Activated CD8-positive, alpha-beta T cell treated with anti-CD3 and anti-CD28 coated beads for 36 hours (primary cell): ENCODE measurements at regions of chr18 and their contacts with region 1.

Region 1: GRCh38 chr18:12934454-12935071 is 13.2 kb upstream of the SEH1L start:
- DNase-seq: peak; percentile 89
- ATAC-seq: peak; percentile 96
- H3K4me3 Mint-ChIP-seq: no peak overlapping the region
- H3K27ac Mint-ChIP-seq: no peak overlapping the region
- H3K4me1 Mint-ChIP-seq: peaks cover 2% of the 10 kb centered on the region
- H3K27me3 Mint-ChIP-seq: peaks cover 2% of the 10 kb centered on the region
- CTCF ChIP-seq: peak; percentile 92

Region 2: GRCh38 chr18:12442946-12443345 is 491.6 kb before region 1 on chr18:
- CTCF ChIA-PET with region 1: no interaction called
- POLR2A ChIA-PET with region 1: no interaction called
- intact Hi-C with region 1: no loop called
- DNase-seq: no peak
- ATAC-seq: no peak
- H3K4me3 Mint-ChIP-seq: no peak overlapping the region
- H3K27ac Mint-ChIP-seq: no peak overlapping the region
- H3K4me1 Mint-ChIP-seq: no peaks in the 10 kb centered on the region
- H3K27me3 Mint-ChIP-seq: no peaks in the 10 kb centered on the region
- CTCF ChIP-seq: no peak

Region 3: GRCh38 chr18:12726774-12727550 is 207.6 kb before region 1 on chr18:
- CTCF ChIA-PET with region 1: interaction called, 132 read pairs
- POLR2A ChIA-PET with region 1: no interaction called
- intact Hi-C with region 1: loop called (anchors 2 kb)
- DNase-seq: peak; percentile 66
- ATAC-seq: peak; percentile 86
- H3K4me3 Mint-ChIP-seq: no peak overlapping the region
- H3K27ac Mint-ChIP-seq: no peak overlapping the region
- H3K4me1 Mint-ChIP-seq: peaks cover under 1% of the 10 kb centered on the region
- H3K27me3 Mint-ChIP-seq: no peaks in the 10 kb centered on the region
- CTCF ChIP-seq: peak; percentile 96

Region 4: GRCh38 chr18:12744103-12744502 is 190.5 kb before region 1 on chr18:
- CTCF ChIA-PET with region 1: interaction called, 44 read pairs
- POLR2A ChIA-PET with region 1: interaction called, 3 read pairs
- intact Hi-C with region 1: loop called (anchors 5 kb)
- DNase-seq: no peak
- ATAC-seq: peak; percentile 53
- H3K4me3 Mint-ChIP-seq: no peak overlapping the region
- H3K27ac Mint-ChIP-seq: no peak overlapping the region
- H3K4me1 Mint-ChIP-seq: no peaks in the 10 kb centered on the region
- H3K27me3 Mint-ChIP-seq: no peaks in the 10 kb centered on the region
- CTCF ChIP-seq: peak; percentile 64

Region 5: DNA sequence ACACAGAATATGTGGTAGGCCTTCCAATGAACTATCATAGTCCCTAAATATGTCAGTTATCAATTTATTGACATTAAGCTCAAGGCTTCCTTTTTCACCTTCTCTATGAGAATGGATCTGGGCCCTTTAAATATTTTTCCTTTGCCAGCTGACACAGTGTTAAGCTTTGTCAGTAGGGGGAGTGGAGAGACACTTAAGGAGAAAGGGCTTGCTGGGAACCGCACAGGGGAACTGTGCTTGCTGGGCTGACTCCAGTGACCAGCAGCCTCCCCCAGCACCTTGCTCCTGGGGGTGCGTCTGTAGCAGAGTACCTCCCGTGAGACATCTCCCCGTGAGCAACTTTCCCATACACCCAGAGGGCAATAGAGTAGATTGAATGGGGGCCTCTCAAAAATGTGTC is 44.1 kb before region 1 on chr18:
- CTCF ChIA-PET with region 1: interaction called, 46 read pairs
- POLR2A ChIA-PET with region 1: no interaction called
- intact Hi-C with region 1: no loop called
- DNase-seq: no peak
- ATAC-seq: no peak
- H3K4me3 Mint-ChIP-seq: no peak overlapping the region
- H3K27ac Mint-ChIP-seq: no peak overlapping the region
- H3K4me1 Mint-ChIP-seq: peaks cover 16% of the 10 kb centered on the region
- H3K27me3 Mint-ChIP-seq: peaks cover 9% of the 10 kb centered on the region
- CTCF ChIP-seq: no peak

Region 6: GRCh38 chr18:12911025-12911928 is 23.3 kb before region 1 on chr18:
- CTCF ChIA-PET with region 1: interaction called, 13 read pairs
- POLR2A ChIA-PET with region 1: no interaction called
- intact Hi-C with region 1: no loop called
- DNase-seq: peak; percentile 78
- ATAC-seq: peak; percentile 94
- H3K4me3 Mint-ChIP-seq: peak overlapping the region; percentile 32
- H3K27ac Mint-ChIP-seq: peak overlapping the region; percentile 57
- H3K4me1 Mint-ChIP-seq: peaks cover 8% of the 10 kb centered on the region
- H3K27me3 Mint-ChIP-seq: no peaks in the 10 kb centered on the region
- CTCF ChIP-seq: no peak

Region 7: DNA sequence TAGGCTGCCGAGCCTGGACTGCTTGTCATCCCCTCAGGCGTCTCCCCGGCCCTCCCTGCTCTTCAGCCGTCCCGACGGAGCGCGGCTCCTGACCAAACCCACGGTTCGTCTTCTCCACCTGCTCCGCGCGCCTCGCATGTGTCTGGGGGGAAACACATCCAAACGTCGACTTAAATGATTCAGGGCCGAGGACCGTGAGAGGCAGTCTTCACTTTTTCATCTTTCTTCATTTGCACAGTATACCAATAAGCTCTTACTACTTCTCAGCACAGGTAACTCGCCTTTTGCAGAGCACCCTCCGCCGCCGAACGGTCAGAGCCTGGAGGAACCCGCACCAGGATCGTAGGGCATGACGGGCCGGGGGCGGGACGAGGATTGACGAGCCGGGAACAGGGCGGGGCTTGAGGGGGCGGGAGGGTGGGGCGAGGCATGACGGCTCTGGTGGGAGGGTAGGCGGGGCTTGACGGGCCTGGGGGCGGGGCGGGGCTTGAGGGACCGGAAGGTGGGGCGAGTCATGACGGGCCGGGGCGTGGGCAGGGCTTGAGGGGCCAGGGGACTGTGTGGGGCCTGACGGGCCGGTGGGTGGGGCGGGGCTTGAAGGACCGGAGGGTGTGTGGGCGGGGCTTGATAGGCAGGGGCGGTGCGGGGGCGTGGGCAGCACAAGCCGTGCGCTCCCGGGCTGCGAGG is 12.9 kb after region 1 on chr18 and contains the start of gene SEH1L:
- CTCF ChIA-PET with region 1: interaction called, 19 read pairs
- POLR2A ChIA-PET with region 1: interaction called, 3 read pairs
- intact Hi-C with region 1: no loop called
- DNase-seq: peak; percentile 100
- ATAC-seq: peak; percentile 88
- H3K4me3 Mint-ChIP-seq: peak within 1 kb of the TSS; percentile 95
- H3K27ac Mint-ChIP-seq: peak within 1 kb of the TSS; percentile 99
- H3K4me1 Mint-ChIP-seq: peaks cover 39% of the 10 kb centered on the region
- H3K27me3 Mint-ChIP-seq: no peaks in the 10 kb centered on the region
- CTCF ChIP-seq: no peak
- total RNA-seq, gene SEH1L: 105 to 110 TPM